MCF 10A (cell line): ENCODE measurements at regions of chr17 and their contacts with region 1.

Region 1: DNA sequence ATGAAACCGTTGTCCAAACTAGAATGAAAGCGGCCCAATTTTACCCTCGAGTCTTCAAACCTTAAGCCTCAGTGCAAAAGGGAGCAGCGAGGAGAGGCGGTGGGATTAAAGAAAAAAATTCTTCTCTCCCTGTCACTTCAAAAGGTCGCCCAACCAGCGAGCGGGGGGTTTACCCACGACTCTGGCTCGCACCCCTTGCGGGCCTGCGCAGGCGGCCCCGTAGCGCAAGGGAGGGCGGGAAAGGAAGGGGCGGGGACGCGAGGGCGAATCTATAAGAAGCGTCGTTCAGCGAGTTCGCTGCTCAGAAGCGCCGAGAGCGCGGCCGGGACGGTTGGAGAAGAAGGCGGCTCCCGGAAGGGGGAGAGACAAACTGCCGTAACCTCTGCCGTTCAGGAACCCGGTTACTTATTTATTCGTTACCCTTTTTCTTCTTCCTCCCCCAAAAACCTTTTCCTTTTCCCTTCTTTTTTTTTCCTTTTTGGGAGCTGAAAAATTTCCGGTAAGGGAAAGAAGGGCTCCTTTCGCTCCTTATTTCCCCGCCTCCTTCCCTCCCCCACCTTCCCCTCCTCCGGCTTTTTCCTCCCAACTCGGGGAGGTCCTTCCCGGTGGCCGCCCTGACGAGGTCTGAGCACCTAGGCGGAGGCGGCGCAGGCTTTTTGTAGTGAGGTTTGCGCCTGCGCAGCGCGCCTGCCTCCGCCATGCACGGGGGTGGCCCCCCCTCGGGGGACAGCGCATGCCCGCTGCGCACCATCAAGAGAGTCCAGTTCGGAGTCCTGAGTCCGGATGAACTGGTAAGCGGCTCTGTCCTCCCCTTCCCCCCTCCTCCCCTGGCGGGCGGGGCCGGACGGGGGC is at the start of gene POLR2A:
- DNase-seq: peak; percentile 98
- H3K4me3 Mint-ChIP-seq: peak within 1 kb of the TSS; percentile 79
- H3K27ac Mint-ChIP-seq: peak within 1 kb of the TSS; percentile 100
- H3K4me1 Mint-ChIP-seq: peaks cover 43% of the 10 kb centered on the region
- H3K27me3 Mint-ChIP-seq: no peaks in the 10 kb centered on the region
- CTCF ChIP-seq: no peak
- total RNA-seq, gene POLR2A: 89.6 and 107 TPM in 2 replicates

Region 2: DNA sequence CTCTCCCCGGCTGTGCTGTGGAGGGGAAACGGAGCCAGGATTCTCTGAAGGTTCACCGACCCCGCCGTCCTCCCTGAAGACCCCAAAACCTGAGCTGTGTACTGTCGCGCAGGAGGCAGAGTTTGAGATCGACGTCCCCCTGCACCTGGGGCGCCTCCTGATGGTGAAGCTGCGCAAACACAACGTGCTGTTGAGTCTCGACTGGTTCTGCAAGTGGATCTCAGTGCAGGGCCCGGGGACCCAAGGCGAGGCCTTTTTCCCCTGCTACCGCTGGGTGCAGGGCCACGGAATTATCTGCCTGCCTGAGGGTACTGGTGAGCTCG is 590.1 kb before region 1 on chr17:
- CTCF ChIA-PET with region 1: no interaction called
- POLR2A ChIA-PET with region 1: no interaction called
- intact Hi-C with region 1: no loop called
- DNase-seq: no peak
- H3K4me3 Mint-ChIP-seq: no peak overlapping the region
- H3K27ac Mint-ChIP-seq: no peak overlapping the region
- H3K4me1 Mint-ChIP-seq: peaks cover 5% of the 10 kb centered on the region
- H3K27me3 Mint-ChIP-seq: no peaks in the 10 kb centered on the region
- CTCF ChIP-seq: peak; percentile 24

Region 3: GRCh38 chr17:7444682-7445618 is 39.3 kb before region 1 on chr17 and contains the start of gene CHRNB1:
- CTCF ChIA-PET with region 1: interaction called, 5 read pairs
- POLR2A ChIA-PET with region 1: interaction called, 115 read pairs
- intact Hi-C with region 1: loop called (anchors 1 kb)
- DNase-seq: no peak
- H3K4me3 Mint-ChIP-seq: peak within 1 kb of the TSS; percentile 31
- H3K27ac Mint-ChIP-seq: peak within 1 kb of the TSS; percentile 90
- H3K4me1 Mint-ChIP-seq: peaks cover 11% of the 10 kb centered on the region
- H3K27me3 Mint-ChIP-seq: no peaks in the 10 kb centered on the region
- CTCF ChIP-seq: no peak
- total RNA-seq, gene CHRNB1: 3.3 and 7.8 TPM in 2 replicates

Region 4: GRCh38 chr17:7466639-7467341 is 17.5 kb before region 1 on chr17:
- CTCF ChIA-PET with region 1: no interaction called
- POLR2A ChIA-PET with region 1: interaction called, 18 read pairs
- intact Hi-C with region 1: no loop called
- DNase-seq: no peak
- H3K4me3 Mint-ChIP-seq: no peak overlapping the region
- H3K27ac Mint-ChIP-seq: peak overlapping the region; percentile 31
- H3K4me1 Mint-ChIP-seq: peaks cover under 1% of the 10 kb centered on the region
- H3K27me3 Mint-ChIP-seq: no peaks in the 10 kb centered on the region
- CTCF ChIP-seq: no peak

Region 5: DNA sequence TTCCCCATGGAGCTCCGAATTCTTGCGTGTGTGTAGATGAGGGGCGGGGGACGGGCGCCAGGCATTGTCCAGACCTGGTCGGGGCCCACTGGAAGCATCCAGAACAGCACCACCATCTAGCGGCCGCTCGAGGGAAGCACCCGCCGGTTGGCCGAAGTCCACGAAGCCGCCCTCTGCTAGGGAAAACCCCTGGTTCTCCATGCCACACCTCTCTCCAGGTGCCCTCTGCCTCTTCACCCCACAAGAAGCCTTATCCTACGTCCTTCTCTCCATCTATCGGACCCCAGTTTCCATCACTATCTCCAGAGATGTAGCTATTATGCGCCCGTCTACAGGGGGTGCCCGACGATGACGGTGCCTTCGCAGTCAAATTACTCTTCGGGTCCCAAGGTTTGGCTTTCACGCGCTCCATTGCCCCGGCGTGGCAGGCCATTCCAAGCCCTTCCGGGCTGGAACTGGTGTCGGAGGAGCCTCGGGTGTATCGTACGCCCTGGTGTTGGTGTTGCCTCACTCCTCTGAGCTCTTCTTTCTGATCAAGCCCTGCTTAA is 76.8 kb after region 1 on chr17:
- CTCF ChIA-PET with region 1: interaction called, 16 read pairs
- POLR2A ChIA-PET with region 1: interaction called, 71 read pairs
- intact Hi-C with region 1: loop called (anchors 1 kb)
- DNase-seq: peak; percentile 92
- H3K4me3 Mint-ChIP-seq: peak overlapping the region; percentile 81
- H3K27ac Mint-ChIP-seq: peak overlapping the region; percentile 91
- H3K4me1 Mint-ChIP-seq: peaks cover 42% of the 10 kb centered on the region
- H3K27me3 Mint-ChIP-seq: no peaks in the 10 kb centered on the region
- CTCF ChIP-seq: peak; percentile 88

Region 6: DNA sequence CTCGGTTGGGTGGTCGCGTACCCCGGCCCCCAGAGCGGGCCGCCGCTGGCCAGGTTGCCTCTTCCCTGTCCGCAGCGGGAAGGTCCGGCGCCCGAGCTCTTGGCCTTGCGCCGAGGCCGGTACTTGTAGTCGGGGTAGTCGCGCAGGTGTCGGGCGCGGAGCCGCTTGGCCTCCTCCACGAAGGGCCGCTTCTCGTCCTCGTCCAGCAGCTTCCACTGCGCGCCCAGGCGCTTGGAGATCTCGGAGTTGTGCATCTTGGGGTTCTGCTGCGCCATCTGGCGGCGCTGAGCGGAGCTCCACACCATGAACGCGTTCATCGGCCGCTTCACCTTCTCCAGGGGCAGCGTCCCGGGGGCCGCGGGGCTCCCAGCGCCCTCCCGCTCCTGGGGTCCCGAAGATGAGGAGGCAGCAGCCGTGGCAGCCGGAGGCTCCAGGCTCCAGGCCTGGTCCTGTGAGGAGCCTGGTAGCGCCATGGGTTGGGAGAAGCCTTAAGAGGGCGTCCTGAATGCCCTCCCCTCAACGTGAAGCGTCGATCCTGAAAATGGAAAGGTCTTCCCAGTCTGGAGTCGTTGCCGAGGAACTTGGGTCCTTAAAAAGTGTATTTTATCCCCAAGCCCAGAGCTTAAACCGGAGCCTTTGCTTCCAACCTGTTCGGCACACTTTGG is 105.0 kb after region 1 on chr17:
- CTCF ChIA-PET with region 1: interaction called, 4 read pairs
- POLR2A ChIA-PET with region 1: interaction called, 21 read pairs
- intact Hi-C with region 1: no loop called
- DNase-seq: peak; percentile 92
- H3K4me3 Mint-ChIP-seq: peak overlapping the region; percentile 76
- H3K27ac Mint-ChIP-seq: peak overlapping the region; percentile 78
- H3K4me1 Mint-ChIP-seq: peaks cover 42% of the 10 kb centered on the region
- H3K27me3 Mint-ChIP-seq: no peaks in the 10 kb centered on the region
- CTCF ChIP-seq: peak; percentile 88

Region 7: GRCh38 chr17:7794075-7794663 is 309.9 kb after region 1 on chr17:
- CTCF ChIA-PET with region 1: no interaction called
- POLR2A ChIA-PET with region 1: no interaction called
- intact Hi-C with region 1: no loop called
- DNase-seq: no peak
- H3K4me3 Mint-ChIP-seq: no peak overlapping the region
- H3K27ac Mint-ChIP-seq: no peak overlapping the region
- H3K4me1 Mint-ChIP-seq: no peaks in the 10 kb centered on the region
- H3K27me3 Mint-ChIP-seq: no peaks in the 10 kb centered on the region
- CTCF ChIP-seq: no peak